A673 (cell line): ENCODE measurements at regions of chr5 and their contacts with region 1.

Region 1: GRCh38 chr5:38420691-38421390 is 135.6 kb downstream of the LIFR start:
- DNase-seq: peak; percentile 89
- H3K4me3 ChIP-seq: no peak overlapping the region
- H3K27ac ChIP-seq: peak overlapping the region; percentile 1
- H3K4me1 ChIP-seq: peaks cover 13% of the 10 kb centered on the region
- H3K27me3 ChIP-seq: no peaks in the 10 kb centered on the region
- CTCF ChIP-seq: peak; percentile 89

Region 2: GRCh38 chr5:39118638-39119037 is 697.8 kb after region 1 on chr5:
- CTCF ChIA-PET with region 1: interaction called, 13 read pairs
- POLR2A ChIA-PET with region 1: no interaction called
- intact Hi-C with region 1: no loop called
- DNase-seq: no peak
- H3K4me3 ChIP-seq: no peak overlapping the region
- H3K27ac ChIP-seq: no peak overlapping the region
- H3K4me1 ChIP-seq: no peaks in the 10 kb centered on the region
- H3K27me3 ChIP-seq: peaks cover 44% of the 10 kb centered on the region
- CTCF ChIP-seq: no peak